ENCODE measurements at regions of chr21 and their contacts with region 1.

Region 1: DNA sequence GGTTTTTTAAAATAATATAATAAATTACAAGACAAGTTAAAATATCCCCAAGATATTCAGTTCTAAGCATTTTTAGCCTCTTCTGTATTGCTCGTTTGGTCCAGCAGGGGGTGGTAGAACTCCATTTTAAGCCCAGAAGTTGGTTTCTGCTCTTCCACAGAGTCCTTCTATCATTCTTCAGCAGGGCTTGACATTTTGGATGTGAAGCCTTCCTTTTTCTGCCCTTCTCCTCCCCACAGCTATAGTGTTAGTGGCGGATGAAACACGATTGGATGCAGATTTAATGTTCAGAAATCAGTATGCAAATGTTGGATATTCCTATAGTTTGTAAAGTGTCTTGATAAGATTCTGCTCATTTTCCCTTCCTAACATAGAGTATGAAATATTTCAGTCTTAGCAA is 1.4 kb downstream of the NCAM2 start:
- DNase-seq: no peak
- ATAC-seq: peak; percentile 80
- H3K4me3 ChIP-seq: no peak overlapping the region
- H3K27ac ChIP-seq: no peak overlapping the region
- H3K4me1 ChIP-seq: no peaks in the 10 kb centered on the region
- H3K27me3 ChIP-seq: no peaks in the 10 kb centered on the region

Region 2: DNA sequence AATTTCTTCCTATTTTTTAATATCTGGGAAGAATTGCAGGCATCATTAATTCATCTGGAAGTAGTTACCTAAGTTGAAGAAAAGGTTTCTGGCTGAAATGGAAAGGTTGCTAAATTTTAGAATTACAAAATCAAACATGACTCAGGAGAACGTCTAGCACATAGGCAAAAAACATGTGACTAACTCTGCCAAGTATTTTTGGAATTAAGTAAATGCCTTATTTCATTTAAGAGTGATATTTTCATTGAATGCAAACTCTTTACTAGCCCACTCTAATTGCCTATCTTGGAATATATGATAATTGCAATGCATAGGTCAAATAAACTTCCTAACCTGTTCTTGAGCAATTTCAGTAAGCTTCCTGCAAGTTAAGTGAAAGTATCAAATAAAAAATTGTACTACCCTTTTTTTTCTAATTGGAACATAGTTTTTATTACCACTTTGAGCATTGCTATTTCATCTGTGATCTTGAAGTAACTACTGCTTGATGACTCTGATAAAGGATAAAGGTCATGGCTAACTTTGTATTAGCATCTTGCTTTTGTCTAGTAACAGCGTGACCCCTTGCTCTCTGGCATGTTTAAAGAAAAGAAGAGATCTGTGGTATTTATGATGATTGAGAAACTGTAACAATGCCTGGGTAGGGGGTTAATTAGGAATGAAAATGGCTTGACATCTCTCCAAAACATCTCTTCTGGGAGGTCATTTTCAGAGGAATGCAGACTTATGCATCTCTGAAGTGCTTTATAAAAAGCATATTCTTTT is 209.7 kb before region 1 on chr21:
- intact Hi-C with region 1: no loop called
- DNase-seq: no peak
- ATAC-seq: no peak
- H3K4me3 ChIP-seq: no peak overlapping the region
- H3K27ac ChIP-seq: no peak overlapping the region
- H3K4me1 ChIP-seq: no peaks in the 10 kb centered on the region
- H3K27me3 ChIP-seq: no peaks in the 10 kb centered on the region

Region 3: DNA sequence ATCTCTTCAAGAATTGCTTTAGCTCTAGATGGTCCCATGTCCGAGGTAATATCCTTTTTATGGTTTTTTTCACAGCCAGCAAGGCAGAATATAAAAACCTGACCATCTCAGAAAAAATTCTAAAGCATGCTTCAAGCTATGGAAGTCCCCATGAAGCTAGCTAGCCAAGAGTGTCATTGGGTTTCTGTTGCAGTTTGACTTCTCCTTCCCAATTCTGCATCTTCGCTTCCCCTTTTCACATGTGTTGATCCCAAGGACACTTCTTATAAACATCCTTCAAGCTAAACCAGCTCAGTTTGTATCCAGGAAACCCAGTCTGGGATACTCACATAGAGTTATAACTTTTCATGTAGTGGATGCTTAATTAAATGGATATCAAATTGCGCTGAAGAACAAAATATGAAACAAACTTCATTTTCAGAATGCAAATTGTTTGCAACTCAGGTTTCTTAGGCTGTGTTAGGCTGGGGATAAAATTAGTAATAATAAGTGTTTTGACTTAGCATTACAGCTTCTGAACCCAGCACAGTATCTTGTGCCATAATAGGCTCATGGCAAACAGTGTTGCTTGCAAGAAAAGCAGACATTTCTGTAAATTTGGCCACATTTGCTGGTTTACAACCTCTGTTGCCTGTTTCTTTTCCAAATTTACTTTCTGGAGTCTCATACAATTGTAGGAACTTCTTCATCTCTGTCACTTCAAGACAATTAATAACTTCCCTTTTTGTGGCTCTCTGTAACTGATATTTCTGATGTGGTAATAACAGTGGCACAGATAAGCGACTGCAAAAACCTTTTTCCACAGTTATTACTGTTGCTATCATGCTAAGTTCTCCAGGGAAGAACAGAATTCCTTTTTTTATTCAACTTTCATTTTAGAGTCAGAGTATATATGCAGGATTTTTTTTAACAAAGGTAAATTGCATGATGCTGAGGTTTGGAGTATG is 51.7 kb after region 1 on chr21:
- intact Hi-C with region 1: no loop called
- DNase-seq: no peak
- ATAC-seq: no peak
- H3K4me3 ChIP-seq: no peak overlapping the region
- H3K27ac ChIP-seq: no peak overlapping the region
- H3K4me1 ChIP-seq: no peaks in the 10 kb centered on the region
- H3K27me3 ChIP-seq: no peaks in the 10 kb centered on the region

Region 4: DNA sequence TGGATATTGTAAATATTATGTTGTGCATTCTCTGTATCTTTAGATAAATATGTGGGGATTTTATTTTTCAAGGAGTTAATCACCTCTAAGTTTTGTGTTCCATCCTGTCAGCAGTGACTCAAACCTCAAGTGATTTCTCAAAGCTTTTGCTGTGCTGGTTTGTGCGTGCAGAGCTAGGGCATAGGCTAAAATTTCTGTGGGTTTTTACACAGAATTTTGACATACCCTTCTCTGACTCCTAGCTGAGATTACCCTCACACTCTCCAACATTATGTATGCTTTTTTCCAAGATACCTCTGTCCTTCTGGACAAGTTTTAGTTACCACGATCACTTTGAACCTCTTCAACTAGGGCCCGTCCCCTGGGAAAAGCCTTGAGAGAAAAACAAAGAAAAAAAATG is 383.5 kb after region 1 on chr21:
- intact Hi-C with region 1: loop called in 1 of 2 experiments (anchors 10 kb)
- DNase-seq: no peak
- ATAC-seq: no peak
- H3K4me3 ChIP-seq: no peak overlapping the region
- H3K27ac ChIP-seq: no peak overlapping the region
- H3K4me1 ChIP-seq: no peaks in the 10 kb centered on the region
- H3K27me3 ChIP-seq: no peaks in the 10 kb centered on the region

Region 5: DNA sequence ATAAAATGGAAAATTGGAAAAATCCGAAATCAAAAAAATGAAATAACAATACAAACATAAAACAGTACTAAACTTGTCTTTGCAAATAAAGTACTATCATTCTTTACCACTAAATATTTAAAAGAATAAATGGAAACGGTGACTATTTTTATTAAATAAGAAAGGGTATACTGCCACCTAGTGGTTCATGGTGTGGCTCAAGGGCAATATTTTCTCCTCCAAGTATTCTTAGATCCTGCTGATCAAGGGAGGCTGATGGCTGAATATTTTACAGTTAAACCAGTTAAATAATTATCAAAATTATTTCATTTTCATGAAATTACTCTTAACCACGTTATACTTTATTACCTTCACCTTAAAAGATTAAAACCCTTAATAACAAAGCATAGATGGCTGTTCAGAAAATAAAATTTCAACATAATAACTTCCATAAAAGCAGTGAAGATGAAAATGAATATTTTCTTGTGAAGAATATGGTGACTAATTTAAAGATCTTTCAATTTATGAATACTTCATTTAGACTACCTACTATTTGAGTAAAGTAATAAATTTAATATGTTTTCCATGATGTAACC is 1792.4 kb after region 1 on chr21:
- intact Hi-C with region 1: loop called (anchors 5 to 10 kb)
- DNase-seq: no peak
- ATAC-seq: no peak
- H3K4me3 ChIP-seq: no peak overlapping the region
- H3K27ac ChIP-seq: no peak overlapping the region
- H3K4me1 ChIP-seq: no peaks in the 10 kb centered on the region
- H3K27me3 ChIP-seq: no peaks in the 10 kb centered on the region

Measured in aorta (tissue), 5 donors.